ENCODE measurements at regions of chr7 and their contacts with region 1.

Region 1: DNA sequence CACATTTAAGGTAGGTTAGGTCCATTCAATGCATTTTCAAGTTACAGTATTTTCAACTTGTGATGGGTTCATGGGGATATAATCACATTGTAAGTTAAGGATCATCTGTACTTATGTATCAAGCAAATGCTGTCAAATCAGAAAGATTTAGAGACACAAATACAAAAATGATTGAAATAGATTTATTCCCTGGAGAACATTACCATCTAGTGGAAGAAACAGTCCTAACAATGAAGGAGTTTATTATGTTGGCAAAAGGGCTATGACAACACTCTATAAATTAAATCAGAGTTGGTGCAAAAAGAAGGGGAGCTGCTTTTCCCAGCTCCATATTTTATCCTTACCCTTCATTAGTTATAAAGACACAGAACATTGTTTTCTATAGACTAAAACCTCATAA is 69.0 kb downstream of the PRSS58 start:
- DNase-seq: no peak
- H3K4me3 ChIP-seq: no peak overlapping the region
- H3K27ac ChIP-seq: no peak overlapping the region
- H3K4me1 ChIP-seq: no peaks in the 10 kb centered on the region
- H3K27me3 ChIP-seq: no peaks in the 10 kb centered on the region
- CTCF ChIP-seq: peak; percentile 7 to 42 (median 39)
- EP300 ChIP-seq: no peak
- POLR2A ChIP-seq: no peak

Region 2: DNA sequence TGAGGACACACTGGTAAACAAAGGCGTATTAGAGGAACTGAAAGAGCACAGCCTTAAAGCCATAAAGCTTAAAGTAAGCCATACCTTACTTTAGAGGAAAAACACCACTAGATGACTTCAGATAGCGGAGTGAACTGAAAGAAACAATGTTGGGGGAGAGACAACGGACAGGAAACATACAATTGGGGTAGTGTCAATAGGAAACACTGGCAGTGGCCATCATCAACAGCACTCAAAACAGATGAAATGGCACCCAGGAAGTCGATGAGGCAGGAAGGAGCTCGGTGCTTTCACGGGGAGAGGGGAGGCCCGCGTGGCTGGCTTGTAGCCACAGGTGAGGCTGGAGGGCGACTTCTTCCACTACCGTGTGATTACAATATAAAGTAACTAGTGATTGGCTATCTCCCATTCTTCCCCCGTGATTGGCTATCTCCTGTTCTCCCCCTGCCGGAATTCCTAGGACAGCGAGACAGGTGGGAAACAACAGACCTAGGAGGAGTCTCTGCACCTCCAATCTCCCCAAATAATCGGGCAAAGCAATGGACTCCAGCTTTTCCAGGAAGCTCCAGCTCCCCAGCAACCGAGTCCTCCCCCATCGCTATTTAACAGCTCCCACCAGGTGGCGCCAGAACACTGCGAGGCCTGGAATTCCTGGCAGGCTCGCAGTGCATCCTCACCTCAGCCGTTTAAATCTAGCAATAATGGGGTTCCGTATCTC is 212.9 kb before region 1 on chr7:
- in situ Hi-C with region 1: loop called in 3 of 4 experiments (anchors 10 to 25 kb)
- intact Hi-C with region 1: no loop called
- DNase-seq: peak; percentile 83
- H3K4me3 ChIP-seq: peak overlapping the region in 3 of 4 donors; percentile 5 to 40 (median 16)
- H3K27ac ChIP-seq: no peak overlapping the region
- H3K4me1 ChIP-seq: peaks cover 0 to 6% (median 0%) of the 10 kb centered on the region in 4 donors
- H3K27me3 ChIP-seq: no peaks in the 10 kb centered on the region
- CTCF ChIP-seq: peak; percentile 59 to 86 (median 77)
- EP300 ChIP-seq: no peak
- POLR2A ChIP-seq: no peak

Region 3: DNA sequence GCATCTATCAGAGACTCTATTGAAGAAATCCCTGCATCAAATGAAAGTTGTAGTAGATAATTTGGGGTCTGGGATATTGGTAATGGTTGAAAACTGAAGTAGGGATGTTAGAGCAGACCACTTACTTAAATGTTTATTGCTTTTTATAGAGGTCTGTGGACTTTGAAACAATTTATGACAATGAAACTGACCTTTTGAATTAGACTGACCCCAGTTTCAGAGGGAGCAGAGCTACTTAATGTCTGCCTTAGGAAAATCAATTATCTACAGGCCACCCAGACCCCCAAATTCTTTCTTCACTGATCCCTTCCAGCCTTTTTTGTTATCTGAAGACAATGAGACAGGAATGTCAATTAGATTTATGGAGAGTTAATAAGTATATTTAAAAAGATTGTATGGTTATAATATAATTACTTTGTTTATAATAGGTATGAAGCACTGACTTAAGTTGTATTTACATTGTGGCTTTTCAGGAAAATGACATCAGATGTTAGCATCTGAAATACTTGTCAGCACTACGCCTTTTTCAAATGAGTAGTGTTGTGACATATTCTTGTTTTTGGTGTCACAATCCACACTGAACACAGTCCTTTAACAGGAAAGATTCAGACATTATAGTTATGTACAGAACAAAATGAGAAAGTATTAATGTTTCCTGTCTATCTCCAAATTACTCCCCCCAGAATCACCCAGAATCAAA is 63.4 kb before region 1 on chr7:
- in situ Hi-C with region 1: no loop called
- intact Hi-C with region 1: no loop called
- DNase-seq: no peak
- H3K4me3 ChIP-seq: no peak overlapping the region
- H3K27ac ChIP-seq: no peak overlapping the region
- H3K4me1 ChIP-seq: no peaks in the 10 kb centered on the region
- H3K27me3 ChIP-seq: no peaks in the 10 kb centered on the region
- CTCF ChIP-seq: no peak
- EP300 ChIP-seq: no peak
- POLR2A ChIP-seq: no peak

Measured in transverse colon (tissue), 4 donors.